ENCODE measurements at regions of chr2 and their contacts with region 1.

Region 1: DNA sequence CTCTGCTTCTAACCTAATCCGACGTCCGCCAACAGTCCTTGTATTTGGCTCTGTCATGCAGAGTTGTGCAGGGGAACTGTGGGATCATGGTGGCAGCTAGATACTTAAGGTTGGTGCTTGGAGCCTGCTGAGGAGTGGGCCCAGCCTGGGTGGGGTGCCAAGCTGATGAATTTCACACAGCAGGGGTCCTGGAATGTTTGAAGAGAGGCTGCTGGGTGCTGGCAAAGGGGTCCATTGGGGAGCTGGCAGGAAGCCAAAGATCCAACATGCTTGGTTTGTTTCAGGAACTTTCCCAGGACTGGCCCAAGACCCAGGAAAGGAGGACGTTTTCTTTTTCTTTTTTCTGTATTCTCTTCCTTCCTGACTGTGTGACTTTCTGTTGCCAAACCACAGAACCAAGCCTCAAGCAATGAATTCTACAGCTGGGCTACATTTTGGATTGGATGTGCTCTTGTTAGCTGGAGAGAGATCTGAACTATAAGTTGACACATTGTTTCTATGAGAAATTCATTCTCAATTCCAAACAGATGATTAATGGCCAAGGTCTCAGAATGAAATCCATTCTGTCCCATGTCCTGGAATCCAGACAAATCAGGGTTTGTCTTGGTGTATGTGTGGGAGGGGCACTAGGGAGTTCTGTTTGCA is 49.9 kb downstream of the DHRS9 start:
- DNase-seq: no peak
- ATAC-seq: no peak
- H3K4me3 Mint-ChIP-seq: no peak overlapping the region
- H3K27ac Mint-ChIP-seq: 0 out of 2 replicates have a peak overlapping the region, but pooled peaks have one; percentile 62
- H3K4me1 Mint-ChIP-seq: peaks cover 9% of the 10 kb centered on the region
- H3K27me3 Mint-ChIP-seq: no peaks in the 10 kb centered on the region; the same call in 1 of the 2 replicates
- CTCF ChIP-seq: no peak

Region 2: DNA sequence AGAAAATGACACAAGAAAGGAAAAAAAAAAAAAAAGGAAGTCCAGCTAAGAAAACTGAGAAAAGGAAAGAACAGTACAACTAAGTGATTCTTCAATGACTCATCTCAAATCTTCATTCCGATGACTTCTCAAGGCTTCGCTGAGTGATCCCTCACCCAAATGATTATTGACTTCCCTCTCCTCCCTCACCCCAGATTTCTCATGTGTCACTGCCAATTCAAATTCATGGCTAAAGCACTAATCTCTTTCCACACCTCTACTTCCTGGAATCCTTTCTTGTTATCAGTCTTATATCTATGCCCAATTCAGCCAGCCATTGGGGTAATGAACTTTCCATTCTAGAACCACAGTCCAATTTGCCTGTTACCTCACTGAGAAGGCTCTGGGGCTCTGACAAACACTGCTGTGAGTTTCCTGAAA is 80.9 kb before region 1 on chr2:
- CTCF ChIA-PET with region 1: no interaction called
- POLR2A ChIA-PET with region 1: no interaction called
- DNase-seq: no peak
- ATAC-seq: no peak
- H3K4me3 Mint-ChIP-seq: no peak overlapping the region
- H3K27ac Mint-ChIP-seq: no peak overlapping the region
- H3K4me1 Mint-ChIP-seq: peaks cover 3% of the 10 kb centered on the region
- H3K27me3 Mint-ChIP-seq: peaks cover 4% of the 10 kb centered on the region; the same call in 1 of the 2 replicates
- CTCF ChIP-seq: no peak

Region 3: GRCh38 chr2:169131587-169132512 is 12.6 kb after region 1 on chr2:
- CTCF ChIA-PET with region 1: interaction called, 10 read pairs
- POLR2A ChIA-PET with region 1: no interaction called
- DNase-seq: no peak
- ATAC-seq: no peak
- H3K4me3 Mint-ChIP-seq: no peak overlapping the region
- H3K27ac Mint-ChIP-seq: no peak overlapping the region
- H3K4me1 Mint-ChIP-seq: peaks cover 6% of the 10 kb centered on the region
- H3K27me3 Mint-ChIP-seq: no peaks in the 10 kb centered on the region
- CTCF ChIP-seq: peak; percentile 70